ENCODE measurements at regions of chr14 and their contacts with region 1.

Region 1: GRCh38 chr14:67335781-67336180 is 23.8 kb downstream of the ATP6V1D start:
- DNase-seq: peak; percentile 14
- H3K4me3 Mint-ChIP-seq: no peak overlapping the region
- H3K27ac Mint-ChIP-seq: no peak overlapping the region
- H3K4me1 Mint-ChIP-seq: no peaks in the 10 kb centered on the region
- H3K27me3 Mint-ChIP-seq: no peaks in the 10 kb centered on the region

Region 2: GRCh38 chr14:67166450-67166853 is 169.3 kb before region 1 on chr14:
- CTCF ChIA-PET with region 1: interaction called, 3 read pairs
- intact Hi-C with region 1: loop called (anchors 1 kb)
- DNase-seq: peak; percentile 71
- H3K4me3 Mint-ChIP-seq: no peak overlapping the region
- H3K27ac Mint-ChIP-seq: no peak overlapping the region
- H3K4me1 Mint-ChIP-seq: no peaks in the 10 kb centered on the region
- H3K27me3 Mint-ChIP-seq: no peaks in the 10 kb centered on the region

Region 3: GRCh38 chr14:67373347-67373746 is 37.6 kb after region 1 on chr14:
- CTCF ChIA-PET with region 1: no interaction called
- intact Hi-C with region 1: no loop called
- DNase-seq: peak; percentile 40
- H3K4me3 Mint-ChIP-seq: no peak overlapping the region
- H3K27ac Mint-ChIP-seq: peak overlapping the region; percentile 82
- H3K4me1 Mint-ChIP-seq: peaks cover 40% of the 10 kb centered on the region
- H3K27me3 Mint-ChIP-seq: no peaks in the 10 kb centered on the region